ENCODE measurements at regions of chr1 and their contacts with region 1.

Region 1: GRCh38 chr1:203340112-203340804 is 10.7 kb downstream of the FMOD start:
- DNase-seq: peak; percentile 39 to 81
- ATAC-seq: peak; percentile 73 to 87 (median 82)
- H3K4me3 ChIP-seq: no peak overlapping the region
- H3K27ac ChIP-seq: no peak overlapping the region
- H3K4me1 ChIP-seq: peaks cover 0 to 35% (median 13%) of the 10 kb centered on the region in 9 donors
- H3K27me3 ChIP-seq: peaks cover 0 to 25% (median 0%) of the 10 kb centered on the region in 7 donors
- CTCF ChIP-seq: peak; percentile 81 to 96 (median 89)

Region 2: GRCh38 chr1:203038891-203039608 is 301.2 kb before region 1 on chr1:
- intact Hi-C with region 1: loop called in 2 of 10 experiments (anchors 5 to 10 kb)
- DNase-seq: peak; percentile 73 to 79
- ATAC-seq: peak; percentile 69 to 89 (median 82)
- H3K4me3 ChIP-seq: peak overlapping the region in 1 of 10 donors; percentile 6
- H3K27ac ChIP-seq: peak overlapping the region in 8 of 10 donors; percentile 58 to 89 (median 84)
- H3K4me1 ChIP-seq: peaks cover 5 to 76% (median 42%) of the 10 kb centered on the region in 9 donors
- H3K27me3 ChIP-seq: peaks cover 0 to 6% (median 0%) of the 10 kb centered on the region in 7 donors
- CTCF ChIP-seq: peak; percentile 86 to 95 (median 91)

Region 3: DNA sequence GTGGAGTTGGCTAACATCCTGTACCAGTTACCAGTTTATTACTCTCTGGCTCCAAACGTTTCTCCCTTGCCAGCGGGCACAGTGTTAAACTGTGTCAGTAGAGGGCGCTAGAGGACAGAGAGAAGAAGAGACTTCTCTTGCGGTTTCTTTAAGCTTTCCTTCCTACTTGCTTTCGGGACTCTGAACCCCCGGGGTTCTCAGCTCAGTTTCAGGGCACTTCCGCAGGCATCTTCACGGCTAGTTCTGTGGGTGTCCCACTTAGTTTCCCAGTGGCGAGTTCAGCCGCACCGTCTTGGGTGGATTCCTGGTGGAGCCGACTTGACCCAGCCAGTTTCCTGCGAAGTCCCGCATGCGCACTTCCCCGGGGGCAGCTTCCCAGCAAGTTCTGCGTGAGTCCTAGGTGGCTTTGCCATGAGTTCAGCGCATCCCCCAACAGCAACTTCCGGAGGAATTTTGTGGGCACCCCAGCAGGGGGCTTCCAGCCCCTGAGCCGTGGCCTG is 72.9 kb before region 1 on chr1:
- intact Hi-C with region 1: loop called in 6 of 10 experiments (anchors 1 to 2 kb)
- DNase-seq: peak; percentile 83 to 87
- ATAC-seq: peak; percentile 60 to 83 (median 74)
- H3K4me3 ChIP-seq: peak overlapping the region in 9 of 10 donors; percentile 37 to 65 (median 59)
- H3K27ac ChIP-seq: peak overlapping the region; percentile 28 to 92 (median 82)
- H3K4me1 ChIP-seq: peaks cover 3 to 25% (median 15%) of the 10 kb centered on the region in 9 donors
- H3K27me3 ChIP-seq: no peaks in the 10 kb centered on the region
- CTCF ChIP-seq: peak; percentile 85 to 99 (median 95)

Region 4: GRCh38 chr1:203273206-203273868 is 66.9 kb before region 1 on chr1:
- intact Hi-C with region 1: loop called in 9 of 10 experiments (anchors 1 to 2 kb)
- DNase-seq: peak; percentile 86 to 88
- ATAC-seq: peak; percentile 59 to 82 (median 74)
- H3K4me3 ChIP-seq: peak overlapping the region in 8 of 10 donors; percentile 17 to 47 (median 42)
- H3K27ac ChIP-seq: peak overlapping the region; percentile 26 to 94 (median 72)
- H3K4me1 ChIP-seq: peaks cover 18 to 77% (median 66%) of the 10 kb centered on the region in 9 donors
- H3K27me3 ChIP-seq: no peaks in the 10 kb centered on the region
- CTCF ChIP-seq: peak; percentile 95 to 99 (median 98)

Region 5: GRCh38 chr1:203284411-203285130 is 55.7 kb before region 1 on chr1:
- intact Hi-C with region 1: no loop called
- DNase-seq: no peak
- ATAC-seq: peak in 1 of 8 donors; percentile 12
- H3K4me3 ChIP-seq: no peak overlapping the region
- H3K27ac ChIP-seq: peak overlapping the region in 4 of 10 donors; percentile 29 to 99 (median 46)
- H3K4me1 ChIP-seq: peaks cover 20 to 93% (median 71%) of the 10 kb centered on the region in 9 donors
- H3K27me3 ChIP-seq: no peaks in the 10 kb centered on the region
- CTCF ChIP-seq: no peak

Region 6: DNA sequence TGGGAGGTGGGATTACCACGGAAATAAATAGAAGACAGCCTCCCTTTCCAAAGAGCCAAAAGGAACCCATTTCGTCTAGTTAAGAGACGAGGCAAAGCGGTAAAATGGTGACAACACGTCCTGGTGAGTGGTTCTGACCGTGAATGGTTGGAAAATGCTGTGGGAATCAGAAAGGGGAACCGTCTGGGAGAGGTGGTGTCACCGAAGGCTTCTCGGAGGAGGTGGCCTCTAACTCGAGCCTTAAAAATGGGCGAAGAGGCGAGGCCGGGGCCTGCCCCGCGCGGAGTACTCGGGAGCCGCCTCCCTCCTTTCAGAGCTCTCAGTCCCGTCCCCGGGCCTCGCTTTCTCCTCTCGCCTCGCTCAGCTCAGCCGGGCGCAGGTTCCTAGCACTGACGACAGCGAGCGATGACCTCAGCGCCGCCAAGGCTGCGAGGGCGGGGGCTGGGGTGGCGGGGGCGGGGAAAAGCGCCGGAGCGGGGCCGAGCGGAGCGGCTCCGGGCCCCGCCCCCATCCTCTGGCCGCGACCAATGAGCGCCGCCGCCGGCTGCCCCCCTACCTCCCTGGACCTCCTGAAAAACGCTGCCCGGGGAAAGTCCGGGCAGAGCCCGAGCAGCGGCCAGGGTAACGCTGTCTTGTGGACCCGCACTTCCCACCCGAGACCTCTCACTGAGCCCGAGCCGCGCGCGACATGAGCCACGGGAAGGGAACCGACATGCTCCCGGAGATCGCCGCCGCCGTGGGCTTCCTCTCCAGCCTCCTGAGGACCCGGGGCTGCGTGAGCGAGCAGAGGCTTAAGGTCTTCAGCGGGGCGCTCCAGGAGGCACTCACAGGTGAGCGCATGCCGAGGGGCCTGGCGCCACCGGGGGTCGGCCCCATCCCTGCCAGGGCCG is 35.1 kb before region 1 on chr1 and contains the start of gene BTG2:
- intact Hi-C with region 1: loop called in 1 of 10 experiments (anchors 2 kb)
- DNase-seq: peak; percentile 94
- ATAC-seq: peak; percentile 88 to 95 (median 94)
- H3K4me3 ChIP-seq: peak within 1 kb of the TSS; percentile 73 to 100 (median 96)
- H3K27ac ChIP-seq: peak within 1 kb of the TSS; percentile 91 to 100 (median 99)
- H3K4me1 ChIP-seq: peaks cover 9 to 57% (median 43%) of the 10 kb centered on the region in 9 donors
- H3K27me3 ChIP-seq: no peaks in the 10 kb centered on the region
- CTCF ChIP-seq: no peak
- total RNA-seq, gene BTG2: 26.4 to 349 (median 58.9) TPM

Region 7: DNA sequence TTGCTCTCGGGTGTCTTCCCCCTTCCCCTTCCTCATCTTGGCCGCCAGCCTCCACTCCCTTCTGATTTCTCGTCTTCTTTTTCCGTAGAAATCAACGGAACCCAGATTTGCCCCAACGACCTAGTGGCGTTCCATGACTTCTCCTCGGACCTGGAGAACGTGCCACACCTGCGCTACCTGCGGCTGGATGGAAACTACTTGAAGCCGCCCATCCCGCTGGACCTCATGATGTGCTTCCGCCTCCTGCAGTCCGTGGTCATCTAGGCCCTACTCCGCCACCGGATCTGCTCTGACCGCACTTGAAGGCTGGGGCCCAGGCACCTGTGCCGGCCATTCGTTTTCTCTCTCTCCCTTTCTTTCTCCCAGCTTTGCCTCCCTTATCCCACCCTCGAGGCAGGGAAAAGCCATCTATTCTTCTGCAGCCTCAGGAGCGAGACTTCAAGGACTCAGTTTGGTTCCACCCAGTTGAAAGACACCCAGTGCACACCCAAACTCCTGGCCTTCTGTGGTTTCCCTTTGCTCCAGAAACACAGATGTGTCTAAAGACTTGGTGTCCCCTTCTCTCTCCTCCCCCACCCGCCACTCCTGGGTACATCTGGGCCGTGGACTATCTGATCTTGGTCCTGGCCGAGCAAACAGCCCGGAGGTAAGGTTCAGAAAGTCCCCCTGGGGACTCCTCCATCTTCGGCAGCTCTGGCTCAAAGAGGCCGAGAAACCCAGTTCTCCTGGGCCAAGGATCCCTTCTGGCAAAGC is 146.5 kb after region 1 on chr1:
- intact Hi-C with region 1: loop called in 9 of 10 experiments (anchors 1 to 5 kb)
- DNase-seq: no peak
- ATAC-seq: peak in 6 of 8 donors; percentile 2 to 30 (median 12)
- H3K4me3 ChIP-seq: peak overlapping the region in 9 of 10 donors; percentile 16 to 51 (median 44)
- H3K27ac ChIP-seq: peak overlapping the region; percentile 72 to 91 (median 82)
- H3K4me1 ChIP-seq: peaks cover 0 to 34% (median 12%) of the 10 kb centered on the region in 9 donors
- H3K27me3 ChIP-seq: no peaks in the 10 kb centered on the region
- CTCF ChIP-seq: no peak

Region 8: DNA sequence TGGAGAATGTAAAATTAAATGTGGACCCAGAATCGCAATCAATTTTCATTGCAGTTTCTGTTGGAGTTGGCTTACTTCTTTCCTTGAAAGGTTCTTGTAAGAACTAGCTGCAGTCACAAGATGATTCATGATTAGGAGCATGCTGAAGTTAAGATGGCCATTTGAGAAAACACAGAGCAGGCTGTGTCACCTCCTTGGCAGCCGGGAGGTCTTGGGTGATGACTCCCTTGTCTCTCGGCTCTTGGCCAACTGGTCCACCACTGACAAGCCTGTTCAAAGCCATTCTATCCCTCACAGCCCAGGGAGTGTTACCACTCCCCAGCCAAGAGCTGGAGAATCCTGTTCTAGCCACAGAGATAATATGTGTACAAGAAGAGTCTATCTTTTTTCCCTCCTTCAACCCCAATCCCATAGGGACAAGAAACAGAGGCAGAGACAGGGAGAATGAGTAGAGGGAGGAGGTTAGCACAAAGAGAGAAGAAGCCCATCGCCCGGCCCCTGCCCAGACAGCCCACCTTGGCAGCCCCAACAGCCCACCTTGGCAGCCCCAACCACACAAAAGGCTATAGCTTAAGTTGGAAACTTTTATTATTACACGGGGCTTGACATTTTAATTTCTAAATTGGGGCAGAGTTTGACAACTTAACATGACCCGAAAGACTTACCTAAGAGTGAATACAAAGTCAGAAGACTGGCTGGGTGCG is 194.4 kb after region 1 on chr1:
- intact Hi-C with region 1: no loop called
- DNase-seq: no peak
- ATAC-seq: peak in 4 of 8 donors; percentile 28 to 69 (median 44)
- H3K4me3 ChIP-seq: no peak overlapping the region
- H3K27ac ChIP-seq: peak overlapping the region in 1 of 10 donors; percentile 41
- H3K4me1 ChIP-seq: peaks cover 0 to 32% (median 22%) of the 10 kb centered on the region in 9 donors
- H3K27me3 ChIP-seq: no peaks in the 10 kb centered on the region
- CTCF ChIP-seq: no peak

Region 9: DNA sequence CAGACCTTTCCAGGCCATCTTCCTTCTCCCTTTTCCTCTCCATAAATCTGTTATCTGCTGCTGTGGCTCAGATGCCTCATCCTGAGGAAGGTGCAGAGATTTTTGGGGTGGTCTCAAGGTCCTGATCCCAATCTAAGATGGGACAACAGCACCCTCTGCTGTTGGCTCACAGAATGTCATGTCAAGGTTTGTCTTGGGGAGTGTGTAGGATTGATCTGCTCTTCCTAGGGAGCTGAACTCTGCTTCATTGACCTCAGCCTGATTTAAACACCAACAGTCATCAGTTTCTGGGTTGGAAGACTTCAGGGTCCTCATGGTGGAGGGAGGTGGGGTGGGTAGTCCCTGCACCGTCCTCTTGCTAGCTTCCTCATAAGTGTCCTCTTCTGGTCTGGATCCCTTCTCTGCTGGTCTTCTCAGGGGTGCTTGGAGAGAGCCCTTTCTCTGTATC is 361.9 kb after region 1 on chr1:
- intact Hi-C with region 1: loop called in 6 of 10 experiments (anchors 10 kb)
- DNase-seq: no peak
- ATAC-seq: peak; percentile 46 to 74 (median 64)
- H3K4me3 ChIP-seq: no peak overlapping the region
- H3K27ac ChIP-seq: peak overlapping the region in 2 of 10 donors; percentile 6
- H3K4me1 ChIP-seq: peaks cover 0 to 21% (median 6%) of the 10 kb centered on the region in 9 donors
- H3K27me3 ChIP-seq: no peaks in the 10 kb centered on the region
- CTCF ChIP-seq: peak; percentile 57 to 90 (median 83)